ENCODE measurements at regions of chr2 and their contacts with region 1.

Region 1: GRCh38 chr2:169877398-169877797 is 50.1 kb downstream of the UBR3 start:
- DNase-seq: no peak
- H3K4me3 ChIP-seq: no peak overlapping the region
- H3K27ac ChIP-seq: no peak overlapping the region
- H3K4me1 ChIP-seq: no peaks in the 10 kb centered on the region
- H3K27me3 ChIP-seq: no peaks in the 10 kb centered on the region
- CTCF ChIP-seq: peak; percentile 60

Region 2: GRCh38 chr2:169824373-169825333 is 52.7 kb before region 1 on chr2 and contains the start of gene METTL5:
- intact Hi-C with region 1: loop called (anchors 5 kb)
- DNase-seq: peak; percentile 83
- H3K4me3 ChIP-seq: peak within 1 kb of the TSS; percentile 82
- H3K27ac ChIP-seq: peak within 1 kb of the TSS; percentile 87
- H3K4me1 ChIP-seq: peaks cover 66% of the 10 kb centered on the region
- H3K27me3 ChIP-seq: no peaks in the 10 kb centered on the region
- CTCF ChIP-seq: peak; percentile 99
- total RNA-seq, gene METTL5: 60.4 TPM